AG04450 (cell line): ENCODE measurements at regions of chr1 and their contacts with region 1.

Region 1: DNA sequence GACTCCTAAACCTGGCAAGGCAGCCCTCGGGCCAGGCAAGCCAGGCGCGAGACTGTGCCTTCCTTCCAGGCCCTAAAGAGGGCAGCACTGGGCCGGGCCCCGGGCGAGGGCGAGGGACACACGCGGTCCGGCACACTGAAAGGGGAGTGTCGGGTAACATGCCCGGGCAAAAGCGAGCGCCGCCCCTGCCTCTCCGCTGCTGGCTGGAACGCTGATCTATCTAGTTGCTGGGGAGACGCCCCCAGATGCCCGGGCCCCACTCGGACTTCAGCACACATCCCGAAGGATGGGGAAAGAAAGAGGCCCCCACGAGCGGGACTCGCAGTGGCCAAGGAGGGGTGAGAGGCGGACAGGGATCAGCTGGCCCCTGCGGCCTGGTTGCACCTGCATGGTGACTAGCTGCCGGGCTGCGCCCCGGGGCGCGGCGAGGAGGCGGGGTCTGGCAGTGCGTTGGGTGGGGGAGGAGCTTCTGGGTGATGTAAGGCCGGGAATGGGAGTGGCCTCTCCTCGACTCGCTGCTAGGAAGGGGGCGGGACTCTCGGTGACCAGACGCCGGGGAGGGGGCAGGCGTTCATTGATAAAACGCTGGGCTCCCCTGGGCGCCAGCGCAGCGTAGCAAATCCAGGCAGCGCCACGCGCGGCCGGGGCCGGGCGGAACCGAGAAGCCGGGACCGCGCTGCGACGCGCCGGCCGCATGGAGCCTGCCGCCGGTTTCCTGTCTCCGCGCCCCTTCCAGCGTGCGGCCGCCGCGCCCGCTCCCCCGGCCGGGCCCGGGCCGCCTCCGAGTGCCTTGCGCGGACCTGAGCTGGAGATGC is at the start of gene PLK3:
- DNase-seq: peak; percentile 95
- H3K4me3 ChIP-seq: peak within 1 kb of the TSS; percentile 85
- H3K27ac ChIP-seq: peak within 1 kb of the TSS; percentile 92
- H3K27me3 ChIP-seq: no peaks in the 10 kb centered on the region
- CTCF ChIP-seq: peak; percentile 93
- polyA plus RNA-seq, gene PLK3: 14.2 and 20.1 TPM in 2 replicates

Region 2: GRCh38 chr1:44786138-44786840 is 13.7 kb before region 1 on chr1:
- CTCF ChIA-PET with region 1: interaction called, 10 read pairs
- POLR2A ChIA-PET with region 1: interaction called, 6 read pairs
- DNase-seq: no peak
- H3K4me3 ChIP-seq: peak overlapping the region; percentile 50
- H3K27ac ChIP-seq: no peak overlapping the region
- H3K27me3 ChIP-seq: peaks cover 2% of the 10 kb centered on the region
- CTCF ChIP-seq: peak; percentile 96

Region 3: DNA sequence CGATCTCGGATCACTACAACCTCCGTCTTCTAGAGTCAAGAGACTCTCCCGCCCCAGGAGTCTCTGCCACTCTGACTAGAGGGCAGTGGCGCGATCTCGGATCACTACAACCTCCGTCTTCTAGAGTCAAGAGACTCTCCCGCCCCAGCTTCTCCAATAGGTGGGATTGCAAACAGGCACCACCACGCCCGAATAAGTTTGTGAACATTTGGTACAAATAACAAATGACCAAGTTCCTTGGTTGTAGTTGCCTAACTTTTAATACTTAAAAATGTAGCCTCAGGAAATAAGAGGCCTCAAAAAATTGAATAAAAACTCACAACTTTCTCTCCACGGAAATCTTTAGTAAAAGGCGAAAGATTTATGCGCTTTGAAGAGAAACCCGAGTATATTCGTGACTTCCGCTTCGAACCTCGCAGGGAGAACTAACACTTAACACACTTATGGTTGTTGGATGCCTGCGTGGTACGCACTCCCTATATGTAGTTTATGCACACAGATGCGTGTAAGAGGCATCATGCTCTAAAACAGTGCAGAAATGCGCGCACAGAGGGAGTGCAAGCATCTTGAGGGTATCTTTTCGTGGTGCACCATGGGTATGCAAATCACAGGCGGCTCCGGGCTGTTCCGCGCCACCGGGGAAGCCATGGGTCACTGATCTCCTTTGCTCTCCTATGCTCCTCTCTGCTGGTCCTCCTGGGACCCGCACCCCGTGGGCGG is 19.8 kb after region 1 on chr1:
- CTCF ChIA-PET with region 1: interaction called, 12 read pairs
- POLR2A ChIA-PET with region 1: interaction called, 81 read pairs
- DNase-seq: peak; percentile 89
- H3K4me3 ChIP-seq: peak overlapping the region; percentile 62
- H3K27ac ChIP-seq: peak overlapping the region; percentile 99
- H3K27me3 ChIP-seq: no peaks in the 10 kb centered on the region
- CTCF ChIP-seq: no peak